ENCODE measurements at regions of chr15 and their contacts with region 1.

Region 1: DNA sequence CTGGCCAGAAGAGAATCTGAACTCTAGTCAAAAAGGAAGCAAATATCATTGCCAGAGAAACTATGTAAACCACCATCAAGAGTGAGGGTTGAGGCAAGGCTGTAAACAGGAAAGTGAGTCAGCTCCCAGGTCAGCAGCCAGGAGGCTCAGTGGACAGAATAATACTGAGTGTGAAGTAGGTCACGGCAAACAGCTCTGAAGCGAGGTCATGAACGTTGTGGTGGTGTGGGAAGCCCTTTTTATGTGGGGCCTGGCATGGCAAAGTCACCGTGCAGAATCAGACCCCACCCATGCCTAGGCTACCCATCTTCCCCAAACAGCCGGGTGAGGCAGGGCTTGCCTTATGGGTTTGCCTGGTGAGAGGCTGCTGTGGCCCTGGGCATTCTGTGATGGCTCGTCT is 43.9 kb downstream of the THBS1 start:
- DNase-seq: peak; percentile 78 to 90 (median 86)
- H3K4me3 ChIP-seq: no peak overlapping the region
- H3K4me3 Mint-ChIP-seq: peak overlapping the region; percentile 76 to 91 (median 82)
- H3K27ac ChIP-seq: peak overlapping the region; percentile 70
- H3K27ac Mint-ChIP-seq: peak overlapping the region; percentile 98 to 100 (median 99)
- H3K4me1 ChIP-seq: peaks cover 80% of the 10 kb centered on the region
- H3K4me1 Mint-ChIP-seq: peaks cover 66 to 89% (median 80%) of the 10 kb centered on the region in 4 donors
- H3K27me3 ChIP-seq: no peaks in the 10 kb centered on the region
- H3K27me3 Mint-ChIP-seq: no peaks in the 10 kb centered on the region

Region 2: DNA sequence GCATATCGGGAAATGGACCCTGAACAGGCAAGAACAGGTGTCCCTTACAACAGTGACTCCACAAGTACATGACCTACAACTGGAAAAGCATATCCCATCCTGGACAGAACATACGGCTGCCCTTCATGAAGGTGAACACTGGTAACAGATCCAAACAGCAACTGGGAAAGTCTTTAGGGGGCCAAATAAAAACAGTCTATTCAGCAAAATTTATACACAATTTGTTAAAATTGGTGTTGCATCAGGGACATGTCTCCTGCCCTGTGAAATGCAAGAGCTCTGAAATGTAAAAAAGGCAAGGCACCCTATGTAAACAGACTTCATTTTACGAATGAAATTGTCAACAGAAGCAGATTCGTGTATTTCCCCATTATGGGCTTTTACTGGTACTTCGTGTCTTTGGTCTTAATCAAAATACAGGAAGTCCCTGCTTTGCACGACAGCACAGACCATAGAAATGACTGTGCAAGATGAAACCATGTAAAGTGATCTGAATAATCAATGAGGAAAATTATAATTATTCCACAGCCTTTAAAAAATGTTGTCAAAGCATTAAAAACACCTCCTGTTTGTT is 171.2 kb before region 1 on chr15:
- CTCF ChIA-PET with region 1: no interaction called
- POLR2A ChIA-PET with region 1: no interaction called
- intact Hi-C with region 1: no loop called
- DNase-seq: no peak
- H3K4me3 ChIP-seq: no peak overlapping the region
- H3K4me3 Mint-ChIP-seq: no peak overlapping the region
- H3K27ac ChIP-seq: no peak overlapping the region
- H3K27ac Mint-ChIP-seq: no peak overlapping the region
- H3K4me1 ChIP-seq: no peaks in the 10 kb centered on the region
- H3K4me1 Mint-ChIP-seq: no peaks in the 10 kb centered on the region
- H3K27me3 ChIP-seq: no peaks in the 10 kb centered on the region
- H3K27me3 Mint-ChIP-seq: peaks cover 13 to 17% of the 10 kb centered on the region in 2 donors

Region 3: GRCh38 chr15:39580117-39580484 is 44.7 kb before region 1 on chr15:
- CTCF ChIA-PET with region 1: interaction called, 7 read pairs
- POLR2A ChIA-PET with region 1: interaction called, 28 read pairs
- intact Hi-C with region 1: loop called (anchors 2 kb)
- DNase-seq: peak; percentile 76 to 84 (median 84)
- H3K4me3 ChIP-seq: peak overlapping the region in 1 of 2 donors; percentile 56
- H3K4me3 Mint-ChIP-seq: peak overlapping the region; percentile 63 to 90 (median 75)
- H3K27ac ChIP-seq: no peak overlapping the region
- H3K27ac Mint-ChIP-seq: peak overlapping the region in 2 of 7 donors; percentile 35 to 69
- H3K4me1 ChIP-seq: peaks cover 14% of the 10 kb centered on the region
- H3K4me1 Mint-ChIP-seq: peaks cover 9 to 53% (median 19%) of the 10 kb centered on the region in 4 donors
- H3K27me3 ChIP-seq: peaks cover 2% of the 10 kb centered on the region
- H3K27me3 Mint-ChIP-seq: peaks cover 15 to 32% of the 10 kb centered on the region in 2 donors

Region 4: GRCh38 chr15:39594056-39594763 is 30.6 kb before region 1 on chr15:
- CTCF ChIA-PET with region 1: interaction called, 45 read pairs
- POLR2A ChIA-PET with region 1: interaction called, 29 read pairs
- intact Hi-C with region 1: loop called (anchors 1 kb)
- DNase-seq: peak in 4 of 5 donors; percentile 40 to 45 (median 42)
- H3K4me3 ChIP-seq: no peak overlapping the region
- H3K4me3 Mint-ChIP-seq: peak overlapping the region in 6 of 8 donors; percentile 13 to 78 (median 52)
- H3K27ac ChIP-seq: peak overlapping the region; percentile 22
- H3K27ac Mint-ChIP-seq: peak overlapping the region in 5 of 7 donors; percentile 3 to 77 (median 67)
- H3K4me1 ChIP-seq: peaks cover 5% of the 10 kb centered on the region
- H3K4me1 Mint-ChIP-seq: peaks cover 3 to 9% (median 6%) of the 10 kb centered on the region in 4 donors
- H3K27me3 ChIP-seq: no peaks in the 10 kb centered on the region
- H3K27me3 Mint-ChIP-seq: no peaks in the 10 kb centered on the region

Region 5: DNA sequence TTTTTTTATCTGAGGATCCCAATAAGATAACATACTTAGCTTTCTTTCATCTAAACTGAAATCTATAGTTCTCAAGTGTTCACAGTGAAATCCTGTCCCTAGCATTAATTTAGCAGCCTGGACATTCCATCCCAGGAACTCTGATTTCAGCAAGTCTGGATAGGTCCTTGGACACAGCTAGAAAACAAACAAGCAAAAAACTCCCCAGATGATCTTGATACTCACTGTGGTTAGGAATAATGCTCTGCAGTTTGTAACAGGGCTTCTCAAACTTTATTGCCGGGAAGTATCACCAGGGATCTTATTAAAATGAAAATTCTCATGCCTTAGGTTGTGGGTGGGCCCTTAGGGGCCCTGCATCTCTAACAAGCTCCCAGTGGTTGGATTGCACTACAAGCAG is 19.7 kb before region 1 on chr15:
- CTCF ChIA-PET with region 1: interaction called, 12 read pairs
- POLR2A ChIA-PET with region 1: interaction called, 59 read pairs
- intact Hi-C with region 1: no loop called
- DNase-seq: no peak
- H3K4me3 ChIP-seq: no peak overlapping the region
- H3K4me3 Mint-ChIP-seq: no peak overlapping the region
- H3K27ac ChIP-seq: no peak overlapping the region
- H3K27ac Mint-ChIP-seq: no peak overlapping the region
- H3K4me1 ChIP-seq: no peaks in the 10 kb centered on the region
- H3K4me1 Mint-ChIP-seq: peaks cover 0 to 2% (median under 1%) of the 10 kb centered on the region in 4 donors
- H3K27me3 ChIP-seq: no peaks in the 10 kb centered on the region
- H3K27me3 Mint-ChIP-seq: peaks cover 1% of the 10 kb centered on the region in 2 donors

Region 6: GRCh38 chr15:39642011-39642640 is 17.3 kb after region 1 on chr15:
- CTCF ChIA-PET with region 1: interaction called, 8 read pairs
- POLR2A ChIA-PET with region 1: interaction called, 29 read pairs
- intact Hi-C with region 1: loop called (anchors 2 kb)
- DNase-seq: no peak
- H3K4me3 ChIP-seq: no peak overlapping the region
- H3K4me3 Mint-ChIP-seq: no peak overlapping the region
- H3K27ac ChIP-seq: peak overlapping the region; percentile 48
- H3K27ac Mint-ChIP-seq: peak overlapping the region; percentile 3 to 92 (median 67)
- H3K4me1 ChIP-seq: peaks cover 20% of the 10 kb centered on the region
- H3K4me1 Mint-ChIP-seq: peaks cover 5 to 21% (median 12%) of the 10 kb centered on the region in 4 donors
- H3K27me3 ChIP-seq: no peaks in the 10 kb centered on the region
- H3K27me3 Mint-ChIP-seq: peaks cover 2 to 3% of the 10 kb centered on the region in 2 donors

Region 7: GRCh38 chr15:39666677-39667076 is 41.9 kb after region 1 on chr15:
- CTCF ChIA-PET with region 1: interaction called, 4 read pairs
- POLR2A ChIA-PET with region 1: interaction called, 14 read pairs
- intact Hi-C with region 1: loop called (anchors 5 kb)
- DNase-seq: no peak
- H3K4me3 ChIP-seq: no peak overlapping the region
- H3K4me3 Mint-ChIP-seq: peak overlapping the region in 1 of 8 donors; percentile 36
- H3K27ac ChIP-seq: no peak overlapping the region
- H3K27ac Mint-ChIP-seq: peak overlapping the region in 1 of 7 donors; percentile 65
- H3K4me1 ChIP-seq: peaks cover 20% of the 10 kb centered on the region
- H3K4me1 Mint-ChIP-seq: peaks cover 7 to 23% (median 12%) of the 10 kb centered on the region in 4 donors
- H3K27me3 ChIP-seq: no peaks in the 10 kb centered on the region
- H3K27me3 Mint-ChIP-seq: no peaks in the 10 kb centered on the region

Region 8: GRCh38 chr15:39686000-39686613 is 61.3 kb after region 1 on chr15:
- CTCF ChIA-PET with region 1: interaction called, 54 read pairs
- POLR2A ChIA-PET with region 1: interaction called, 10 read pairs
- intact Hi-C with region 1: loop called (anchors 2 kb)
- DNase-seq: peak in 4 of 5 donors; percentile 28 to 36 (median 31)
- H3K4me3 ChIP-seq: no peak overlapping the region
- H3K4me3 Mint-ChIP-seq: no peak overlapping the region
- H3K27ac ChIP-seq: no peak overlapping the region
- H3K27ac Mint-ChIP-seq: no peak overlapping the region
- H3K4me1 ChIP-seq: no peaks in the 10 kb centered on the region
- H3K4me1 Mint-ChIP-seq: peaks cover 0 to 15% (median 4%) of the 10 kb centered on the region in 4 donors
- H3K27me3 ChIP-seq: no peaks in the 10 kb centered on the region
- H3K27me3 Mint-ChIP-seq: peaks cover 0 to 1% of the 10 kb centered on the region in 2 donors

Region 9: GRCh38 chr15:40660686-40661085 is 1035.9 kb after region 1 on chr15:
- CTCF ChIA-PET with region 1: no interaction called
- POLR2A ChIA-PET with region 1: no interaction called
- intact Hi-C with region 1: no loop called
- DNase-seq: no peak
- H3K4me3 ChIP-seq: no peak overlapping the region
- H3K4me3 Mint-ChIP-seq: no peak overlapping the region
- H3K27ac ChIP-seq: no peak overlapping the region
- H3K27ac Mint-ChIP-seq: no peak overlapping the region
- H3K4me1 ChIP-seq: no peaks in the 10 kb centered on the region
- H3K4me1 Mint-ChIP-seq: no peaks in the 10 kb centered on the region
- H3K27me3 ChIP-seq: no peaks in the 10 kb centered on the region
- H3K27me3 Mint-ChIP-seq: no peaks in the 10 kb centered on the region